ENCODE measurements at regions of chr10 and their contacts with region 1.

Region 1: DNA sequence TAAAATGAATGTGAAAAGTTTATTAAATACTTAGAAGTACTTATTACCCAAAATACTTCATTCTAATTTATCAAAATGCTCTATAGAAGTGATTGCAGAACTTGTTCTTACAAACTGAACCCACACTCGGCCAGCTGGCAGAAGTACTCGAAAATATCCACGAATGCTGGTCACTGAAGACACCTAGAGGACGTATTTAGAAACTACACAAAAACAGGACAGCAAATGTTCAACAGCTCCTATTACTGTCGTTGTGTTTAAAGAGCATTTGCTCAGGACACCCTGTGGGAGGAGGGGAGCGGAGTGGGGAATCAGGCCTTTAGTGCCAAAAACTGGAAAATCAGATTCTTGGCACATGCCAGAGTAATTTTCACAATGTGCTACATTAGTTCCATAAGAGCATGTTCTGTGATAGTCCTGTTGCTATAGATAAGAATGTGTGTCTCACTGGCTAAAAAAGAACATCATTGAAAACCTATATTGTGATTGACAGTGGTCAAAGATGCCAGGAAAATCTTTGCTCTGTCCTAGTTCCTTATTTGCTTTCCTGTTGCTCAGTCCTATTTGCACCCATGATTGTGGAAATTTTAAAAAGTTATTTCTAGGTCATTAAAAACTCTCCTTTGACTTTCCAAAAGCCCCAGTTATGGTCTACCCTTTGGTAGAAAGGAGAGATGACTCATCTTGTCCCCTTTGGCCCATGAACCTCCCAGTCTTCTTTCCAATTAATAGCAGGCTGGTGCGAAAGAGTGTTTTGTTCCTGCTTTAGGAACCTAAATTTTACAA is 49.0 kb upstream of the NRBF2 start:
- DNase-seq: peak; percentile 58 to 75
- ATAC-seq: peak; percentile 87 to 99 (median 92)
- H3K4me3 ChIP-seq: no peak overlapping the region
- H3K27ac ChIP-seq: no peak overlapping the region
- H3K4me1 ChIP-seq: no peaks in the 10 kb centered on the region
- H3K27me3 ChIP-seq: no peaks in the 10 kb centered on the region
- CTCF ChIP-seq: peak; percentile 83

Region 2: DNA sequence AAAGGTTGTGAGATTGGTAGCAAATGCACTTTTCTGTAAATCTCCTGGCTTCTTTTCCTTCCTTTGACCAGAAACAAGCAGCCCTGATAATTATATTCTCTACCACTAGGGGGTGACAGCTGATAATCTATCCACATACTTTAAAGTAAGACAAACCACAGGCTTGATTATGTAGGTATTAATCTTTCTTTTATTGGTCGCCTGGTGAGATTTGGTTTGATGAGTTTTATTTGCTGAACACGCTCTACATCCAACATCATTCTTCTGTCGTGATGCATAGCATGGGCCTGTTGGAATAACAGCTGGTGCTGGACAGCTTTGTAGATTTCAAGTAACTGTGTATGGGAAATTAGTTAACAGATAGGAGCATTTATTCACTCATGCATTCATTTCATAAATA is 646.4 kb before region 1 on chr10:
- intact Hi-C with region 1: loop called in 1 of 2 experiments (anchors 5 kb)
- DNase-seq: no peak
- ATAC-seq: peak in 1 of 4 donors; percentile 74
- H3K4me3 ChIP-seq: no peak overlapping the region
- H3K27ac ChIP-seq: no peak overlapping the region
- H3K4me1 ChIP-seq: no peaks in the 10 kb centered on the region
- H3K27me3 ChIP-seq: no peaks in the 10 kb centered on the region
- CTCF ChIP-seq: peak; percentile 78

Region 3: DNA sequence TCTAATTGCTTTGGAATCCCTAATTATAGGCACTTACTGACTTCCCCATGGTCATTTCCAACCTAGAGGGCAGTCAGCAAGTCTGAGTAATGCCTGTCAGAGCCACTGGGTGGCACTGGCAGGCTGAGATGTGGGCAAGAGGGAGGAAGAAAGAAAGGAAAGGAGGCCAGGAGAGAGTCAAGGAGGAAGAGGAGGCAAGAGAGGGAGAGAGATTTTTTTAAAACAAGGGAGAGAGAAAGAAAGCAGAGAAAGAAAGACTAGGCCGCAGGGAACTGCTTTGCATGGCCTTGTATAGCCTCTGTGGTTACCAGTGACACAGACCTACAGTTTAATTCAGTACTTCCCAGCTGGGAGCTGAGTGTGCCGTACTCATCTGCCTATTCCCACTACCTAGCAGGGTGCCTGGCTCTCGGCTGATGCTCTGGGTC is 490.0 kb before region 1 on chr10:
- intact Hi-C with region 1: loop called (anchors 1 to 10 kb)
- DNase-seq: peak; percentile 54 to 64
- ATAC-seq: peak; percentile 77 to 90 (median 82)
- H3K4me3 ChIP-seq: no peak overlapping the region
- H3K27ac ChIP-seq: no peak overlapping the region
- H3K4me1 ChIP-seq: no peaks in the 10 kb centered on the region
- H3K27me3 ChIP-seq: no peaks in the 10 kb centered on the region
- CTCF ChIP-seq: peak; percentile 88

Measured in psoas muscle (tissue), 8 donors.